Activated T-helper 1 cell treated with anti-CD3 and anti-CD28 coated beads, Interleukin-12 subunit alpha, Interleukin-12 subunit beta, Interleukin-2, Interleukin-4 antibody, amounts not matched to agents 30 ng/mL and 10 ng/mL and 1 ng/mL, durations not matched to agents 14 hours and 24 hours and 36 hours (primary cell): ENCODE measurements at regions of chr1 and their contacts with region 1.

Region 1: GRCh38 chr1:1040004-1040991 is 20.4 kb downstream of the AGRN start:
- DNase-seq: peak; percentile 78
- H3K4me3 Mint-ChIP-seq: peak overlapping the region; percentile 64
- H3K27ac Mint-ChIP-seq: no peak overlapping the region
- H3K4me1 Mint-ChIP-seq: peaks cover 14% of the 10 kb centered on the region
- H3K27me3 Mint-ChIP-seq: peaks cover 16% of the 10 kb centered on the region

Region 2: GRCh38 chr1:951364-951763 is 88.9 kb before region 1 on chr1:
- intact Hi-C with region 1: no loop called
- DNase-seq: no peak
- H3K4me3 Mint-ChIP-seq: no peak overlapping the region
- H3K27ac Mint-ChIP-seq: no peak overlapping the region
- H3K4me1 Mint-ChIP-seq: no peaks in the 10 kb centered on the region
- H3K27me3 Mint-ChIP-seq: no peaks in the 10 kb centered on the region

Region 3: GRCh38 chr1:999725-1000356 is 40.5 kb before region 1 on chr1 and contains the start of gene HES4:
- intact Hi-C with region 1: no loop called
- DNase-seq: peak; percentile 45
- H3K4me3 Mint-ChIP-seq: peak within 1 kb of the TSS; percentile 66
- H3K27ac Mint-ChIP-seq: peak within 1 kb of the TSS; percentile 78
- H3K4me1 Mint-ChIP-seq: peaks cover 5% of the 10 kb centered on the region
- H3K27me3 Mint-ChIP-seq: peaks cover 33% of the 10 kb centered on the region
- total RNA-seq, gene HES4: 1.8 and 2.9 TPM in 2 replicates

Region 4: GRCh38 chr1:1019122-1019999 is 20.9 kb before region 1 on chr1:
- intact Hi-C with region 1: loop called (anchors 1 kb)
- DNase-seq: peak; percentile 75
- H3K4me3 Mint-ChIP-seq: peak overlapping the region; percentile 70
- H3K27ac Mint-ChIP-seq: no peak overlapping the region
- H3K4me1 Mint-ChIP-seq: peaks cover 18% of the 10 kb centered on the region
- H3K27me3 Mint-ChIP-seq: peaks cover 3% of the 10 kb centered on the region

Region 5: DNA sequence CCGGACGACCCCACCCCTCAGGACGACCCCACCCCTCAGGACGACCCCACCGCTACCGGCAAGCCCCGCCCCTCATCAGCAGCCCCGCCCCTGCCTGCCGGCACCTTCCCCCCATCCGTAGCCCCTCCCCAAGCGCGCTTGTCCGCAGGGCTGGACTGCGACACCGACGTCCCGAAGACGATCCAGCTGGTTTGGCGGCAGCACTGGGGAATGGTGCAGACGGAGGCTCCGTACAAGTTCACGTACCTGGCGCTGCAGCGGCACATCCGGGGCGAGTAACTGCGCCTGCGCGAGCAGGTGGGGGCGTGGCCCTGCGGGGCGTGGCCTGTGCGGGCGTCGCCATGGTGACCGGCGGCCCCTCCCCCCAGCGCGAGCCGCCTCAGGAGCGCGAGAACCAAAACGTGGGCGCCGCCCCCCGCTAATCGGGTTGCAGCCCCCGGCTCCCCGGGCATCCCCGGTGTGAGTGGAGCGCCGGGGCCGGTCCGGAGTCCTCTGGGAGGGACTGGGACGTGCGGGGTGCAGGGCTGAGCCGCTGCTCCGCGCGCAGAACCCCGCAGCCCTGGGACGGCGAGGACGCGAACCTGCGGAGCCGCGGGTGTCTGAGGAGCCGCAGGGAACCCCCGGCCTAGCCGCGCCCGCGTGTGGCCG is 28.9 kb after region 1 on chr1:
- intact Hi-C with region 1: loop called (anchors 2 kb)
- DNase-seq: peak; percentile 84
- H3K4me3 Mint-ChIP-seq: peak overlapping the region; percentile 76
- H3K27ac Mint-ChIP-seq: no peak overlapping the region
- H3K4me1 Mint-ChIP-seq: peaks cover 7% of the 10 kb centered on the region
- H3K27me3 Mint-ChIP-seq: peaks cover 3% of the 10 kb centered on the region

Region 6: GRCh38 chr1:1098681-1099421 is 58.6 kb after region 1 on chr1:
- intact Hi-C with region 1: loop called (anchors 2 kb)
- DNase-seq: no peak
- H3K4me3 Mint-ChIP-seq: no peak overlapping the region
- H3K27ac Mint-ChIP-seq: peak overlapping the region; percentile 74
- H3K4me1 Mint-ChIP-seq: peaks cover 26% of the 10 kb centered on the region
- H3K27me3 Mint-ChIP-seq: peaks cover 9% of the 10 kb centered on the region

Region 7: DNA sequence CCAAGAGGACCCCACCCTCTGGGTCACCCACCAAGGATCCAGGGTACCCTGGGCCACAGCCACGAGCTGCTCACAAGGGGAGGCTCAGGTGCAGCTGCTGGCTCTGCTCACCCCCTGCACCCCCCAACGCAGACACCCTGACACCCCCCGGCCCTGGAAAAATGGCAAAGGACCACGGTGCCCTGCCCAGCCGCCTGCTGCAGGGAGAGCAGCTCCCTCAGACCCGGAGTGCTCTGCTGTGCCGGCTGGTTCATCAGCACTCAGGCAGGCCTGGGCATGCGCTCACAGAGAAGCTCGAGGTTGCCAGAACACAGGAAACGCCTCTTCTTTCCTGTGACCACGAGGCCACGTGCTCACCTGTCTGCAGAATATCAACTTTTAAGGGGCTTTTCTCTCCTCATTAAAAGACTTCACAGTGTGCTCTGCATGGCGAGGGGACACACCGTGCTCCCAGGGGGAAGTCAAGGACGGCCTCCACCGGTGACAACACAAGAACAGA is 210.5 kb after region 1 on chr1:
- intact Hi-C with region 1: no loop called
- DNase-seq: peak; percentile 62
- H3K4me3 Mint-ChIP-seq: peak overlapping the region; percentile 37
- H3K27ac Mint-ChIP-seq: peak overlapping the region; percentile 89
- H3K4me1 Mint-ChIP-seq: peaks cover 14% of the 10 kb centered on the region
- H3K27me3 Mint-ChIP-seq: no peaks in the 10 kb centered on the region